GM12878 (cell line): ENCODE measurements at regions of chr15 and their contacts with region 1.

Region 1: DNA sequence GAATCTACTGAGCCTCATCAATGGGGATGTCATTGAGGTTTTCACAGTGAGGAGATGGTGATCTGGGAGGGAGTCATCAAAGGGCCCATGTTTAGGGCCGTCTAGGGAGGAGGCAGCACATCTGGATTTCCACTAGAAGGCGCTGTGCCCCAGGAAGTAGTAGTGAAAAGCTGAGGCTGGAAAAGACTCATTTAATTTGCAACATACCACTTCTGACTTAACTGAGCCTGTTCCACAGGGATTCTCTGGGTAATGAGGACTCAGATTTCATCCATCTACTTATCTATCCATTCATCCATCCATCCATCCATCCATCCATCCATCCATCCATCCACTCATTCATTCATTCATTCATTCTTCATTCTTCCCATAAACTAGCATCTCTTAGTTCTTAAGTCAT is 17.4 kb upstream of the SHF start:
- DNase-seq: peak; percentile 16
- ATAC-seq: peak; percentile 45
- H3K4me3 ChIP-seq: no peak overlapping the region
- H3K27ac ChIP-seq: no peak overlapping the region
- H3K4me1 ChIP-seq: no peaks in the 10 kb centered on the region; the same call in none of the 2 replicates
- H3K27me3 ChIP-seq: no peaks in the 10 kb centered on the region
- CTCF ChIP-seq: peak; percentile 90 to 94 (median 92)
- EP300 ChIP-seq: no peak
- POLR2A ChIP-seq: no peak
- RAD21 ChIP-seq: peak; percentile 87

Region 2: GRCh38 chr15:44918136-44918535 is 287.1 kb before region 1 on chr15:
- CTCF ChIA-PET with region 1: no interaction called
- POLR2A ChIA-PET with region 1: no interaction called
- RAD21 ChIA-PET with region 1: no interaction called
- SMC1A ChIA-PET with region 1: no interaction called
- in situ Hi-C with region 1: no loop called
- intact Hi-C with region 1: no loop called
- DNase-seq: no peak
- ATAC-seq: no peak
- H3K4me3 ChIP-seq: no peak overlapping the region
- H3K27ac ChIP-seq: no peak overlapping the region
- H3K4me1 ChIP-seq: no peaks in the 10 kb centered on the region
- H3K27me3 ChIP-seq: no peaks in the 10 kb centered on the region
- CTCF ChIP-seq: no peak
- EP300 ChIP-seq: no peak
- POLR2A ChIP-seq: no peak
- RAD21 ChIP-seq: no peak

Region 3: GRCh38 chr15:45126535-45127158 is 78.5 kb before region 1 on chr15:
- CTCF ChIA-PET with region 1: interaction called, 21 read pairs
- POLR2A ChIA-PET with region 1: no interaction called
- RAD21 ChIA-PET with region 1: interaction called, 4 read pairs
- SMC1A ChIA-PET with region 1: interaction called, 9 read pairs
- in situ Hi-C with region 1: no loop called
- intact Hi-C with region 1: no loop called
- DNase-seq: no peak
- ATAC-seq: peak; percentile 89
- H3K4me3 ChIP-seq: no peak overlapping the region
- H3K27ac ChIP-seq: no peak overlapping the region
- H3K4me1 ChIP-seq: no peaks in the 10 kb centered on the region
- H3K27me3 ChIP-seq: peaks cover 4 to 8% of the 10 kb centered on the region in 2 experiments
- CTCF ChIP-seq: peak; percentile 64 to 72 (median 67)
- EP300 ChIP-seq: no peak
- POLR2A ChIP-seq: no peak
- RAD21 ChIP-seq: peak; percentile 45

Region 4: DNA sequence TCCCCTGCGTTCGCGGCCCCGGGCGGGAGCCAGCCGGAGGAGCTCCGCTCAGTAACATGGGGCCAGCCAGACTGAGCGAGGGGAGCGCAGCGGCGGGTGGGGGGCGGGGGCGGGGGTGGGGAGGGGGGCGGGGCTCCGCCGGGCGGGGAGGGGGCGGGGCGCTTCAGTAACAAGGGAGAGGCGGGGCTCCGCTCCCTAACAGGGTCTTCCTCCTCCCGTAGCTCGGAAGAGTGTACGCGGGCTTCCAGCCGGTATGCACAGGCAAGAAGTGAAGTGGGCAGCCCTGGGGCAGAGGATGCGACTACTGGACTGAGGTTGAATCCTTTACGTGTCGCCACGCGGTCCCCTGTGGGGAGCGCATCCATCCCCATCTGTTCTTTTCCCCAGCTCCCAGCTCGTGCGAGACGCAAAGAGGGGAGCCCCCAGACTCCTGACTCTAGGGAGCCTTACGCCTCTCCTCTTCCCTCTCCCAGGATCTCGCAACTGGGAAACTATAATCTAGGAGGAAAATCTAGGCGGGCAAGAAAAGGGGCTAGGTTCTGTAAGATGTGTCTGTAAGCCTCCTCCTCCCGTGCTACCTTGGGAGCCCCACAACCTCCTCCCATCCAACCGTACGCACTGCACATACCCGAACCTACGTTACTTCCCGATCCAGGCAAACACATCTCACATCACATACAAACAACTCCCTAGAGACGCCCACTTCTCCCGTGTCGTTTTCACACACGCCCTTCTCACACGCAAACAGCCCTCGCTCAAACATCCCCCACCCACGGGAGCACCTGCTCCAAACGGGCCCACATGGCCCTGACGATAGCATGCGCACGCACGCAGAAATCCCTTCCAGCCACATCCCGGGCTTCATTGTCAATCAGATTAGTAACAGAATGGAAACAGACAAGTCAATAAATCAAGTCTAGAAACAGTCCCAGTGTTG is 17.0 kb before region 1 on chr15 and contains the start of gene SHF:
- CTCF ChIA-PET with region 1: interaction called, 12 read pairs
- POLR2A ChIA-PET with region 1: interaction called, 18 read pairs
- RAD21 ChIA-PET with region 1: interaction called, 7 read pairs
- SMC1A ChIA-PET with region 1: interaction called, 3 read pairs
- in situ Hi-C with region 1: no loop called
- intact Hi-C with region 1: no loop called
- DNase-seq: no peak
- ATAC-seq: peak; percentile 75
- H3K4me3 ChIP-seq: peak within 1 kb of the TSS; percentile 80
- H3K27ac ChIP-seq: no peak within 1 kb of the TSS
- H3K4me1 ChIP-seq: peaks cover 4% of the 10 kb centered on the region
- H3K27me3 ChIP-seq: peaks cover 0 to 2% of the 10 kb centered on the region in 2 experiments; a peak in 2 of 4 replicates
- CTCF ChIP-seq: no peak
- EP300 ChIP-seq: peak; percentile 94 to 95; a peak in 3 of 4 replicates
- POLR2A ChIP-seq: peak; percentile 82
- RAD21 ChIP-seq: no peak
- polyA plus RNA-seq, gene SHF: 0.04 TPM in 1 of 2 experiments, not detected in the other

Region 5: DNA sequence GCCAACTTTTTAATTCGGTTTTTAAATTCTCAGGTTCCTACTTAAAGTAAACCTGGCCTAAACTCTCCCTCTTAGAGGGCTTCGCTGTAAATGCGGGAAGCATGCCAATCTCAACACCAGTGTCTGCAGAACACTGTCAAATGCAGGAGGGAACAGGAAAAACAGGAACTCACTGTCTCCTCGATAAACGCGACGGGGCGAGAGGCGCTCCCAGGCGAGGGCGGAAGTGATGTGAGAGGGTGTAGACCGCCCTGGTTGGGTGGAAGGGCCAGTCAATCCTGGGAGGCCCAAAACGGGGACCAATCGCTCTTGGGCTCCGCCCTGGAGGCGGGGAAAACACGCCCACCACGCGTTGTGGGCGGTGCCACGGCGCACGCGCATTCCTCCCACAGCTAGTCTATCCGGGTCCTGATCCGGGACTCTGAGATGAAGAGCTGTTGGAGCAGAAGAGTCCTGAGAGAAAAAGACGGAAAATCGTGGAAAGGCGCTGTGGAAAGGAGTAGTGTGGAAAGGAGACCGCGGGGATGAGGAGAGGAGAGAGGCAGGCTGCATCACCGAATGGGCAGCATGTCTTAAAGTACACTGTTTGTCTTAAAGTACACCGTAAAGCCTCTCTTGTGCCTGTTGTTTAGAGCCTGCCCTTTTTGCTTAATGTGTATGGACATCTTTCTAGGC is 74.0 kb after region 1 on chr15:
- CTCF ChIA-PET with region 1: no interaction called
- POLR2A ChIA-PET with region 1: interaction called, 3 read pairs
- RAD21 ChIA-PET with region 1: interaction called, 11 read pairs
- SMC1A ChIA-PET with region 1: interaction called, 4 read pairs
- in situ Hi-C with region 1: loop called (anchors 5 kb)
- intact Hi-C with region 1: loop called (anchors 2 kb)
- DNase-seq: peak; percentile 95
- ATAC-seq: peak; percentile 100
- H3K4me3 ChIP-seq: peak overlapping the region; percentile 95
- H3K27ac ChIP-seq: peak overlapping the region; percentile 45
- H3K4me1 ChIP-seq: peaks cover 3% of the 10 kb centered on the region
- H3K27me3 ChIP-seq: no peaks in the 10 kb centered on the region
- CTCF ChIP-seq: no peak
- EP300 ChIP-seq: no peak
- POLR2A ChIP-seq: peak; percentile 91
- RAD21 ChIP-seq: no peak

Region 6: GRCh38 chr15:45351229-45351628 is 146.0 kb after region 1 on chr15:
- CTCF ChIA-PET with region 1: no interaction called
- POLR2A ChIA-PET with region 1: no interaction called
- RAD21 ChIA-PET with region 1: no interaction called
- SMC1A ChIA-PET with region 1: no interaction called
- in situ Hi-C with region 1: no loop called
- intact Hi-C with region 1: no loop called
- DNase-seq: no peak
- ATAC-seq: no peak
- H3K4me3 ChIP-seq: no peak overlapping the region
- H3K27ac ChIP-seq: no peak overlapping the region
- H3K4me1 ChIP-seq: no peaks in the 10 kb centered on the region
- H3K27me3 ChIP-seq: no peaks in the 10 kb centered on the region
- CTCF ChIP-seq: no peak
- EP300 ChIP-seq: no peak
- POLR2A ChIP-seq: no peak
- RAD21 ChIP-seq: no peak

Region 7: GRCh38 chr15:45391746-45392583 is 186.8 kb after region 1 on chr15:
- CTCF ChIA-PET with region 1: interaction called, 211 read pairs
- POLR2A ChIA-PET with region 1: interaction called, 6 read pairs
- RAD21 ChIA-PET with region 1: interaction called, 87 read pairs
- SMC1A ChIA-PET with region 1: interaction called, 111 read pairs
- in situ Hi-C with region 1: loop called (anchors 5 kb)
- intact Hi-C with region 1: no loop called
- DNase-seq: peak; percentile 90
- ATAC-seq: peak; percentile 96
- H3K4me3 ChIP-seq: 0 out of 2 replicates have a peak overlapping the region, but pooled peaks have one; percentile 11
- H3K27ac ChIP-seq: peak overlapping the region; percentile 72
- H3K4me1 ChIP-seq: peaks cover 21% of the 10 kb centered on the region
- H3K27me3 ChIP-seq: no peaks in the 10 kb centered on the region
- CTCF ChIP-seq: no peak
- EP300 ChIP-seq: peak; percentile 76 to 85
- POLR2A ChIP-seq: no peak
- RAD21 ChIP-seq: no peak

Region 8: DNA sequence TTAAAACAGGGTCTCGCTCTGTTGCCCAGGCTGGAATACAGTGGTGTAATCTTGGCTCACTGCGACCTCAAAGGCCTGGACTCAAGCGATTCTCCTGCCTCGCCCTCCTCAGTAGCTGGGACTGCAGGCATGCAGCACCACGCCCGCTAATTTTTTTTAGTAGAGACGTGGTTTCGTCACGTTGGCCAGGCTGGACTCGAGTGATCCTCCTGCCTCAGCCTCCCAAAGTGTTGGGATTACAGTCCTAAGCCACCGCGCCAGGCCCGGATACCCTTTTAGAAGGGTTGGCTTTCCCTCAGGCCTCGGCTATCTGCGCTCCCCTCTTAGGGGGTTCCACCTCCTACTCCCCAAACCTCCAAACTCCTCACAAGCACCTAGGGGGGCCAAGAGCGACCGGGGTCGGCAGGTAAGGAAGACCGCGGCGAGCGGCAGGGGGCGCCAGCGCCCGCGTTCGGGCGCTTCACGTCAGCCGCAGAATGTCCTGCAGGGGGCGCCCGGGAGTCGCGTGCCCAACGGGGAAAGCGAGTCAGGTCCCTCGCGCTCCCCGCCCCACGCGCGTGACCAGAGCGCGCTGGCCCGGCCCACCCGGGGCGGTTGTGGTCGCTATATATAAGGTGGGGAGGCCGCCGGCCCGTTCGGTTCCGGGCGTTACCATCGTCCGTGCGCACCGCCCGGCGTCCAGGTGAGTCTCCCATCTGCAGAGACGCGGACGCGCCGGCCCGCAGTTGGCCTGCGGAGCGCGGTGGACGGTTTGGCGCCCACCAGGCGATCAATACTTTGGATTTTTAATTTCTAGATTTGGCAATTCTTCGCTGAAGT is 225.0 kb after region 1 on chr15:
- CTCF ChIA-PET with region 1: interaction called, 26 read pairs
- POLR2A ChIA-PET with region 1: no interaction called
- RAD21 ChIA-PET with region 1: interaction called, 6 read pairs
- SMC1A ChIA-PET with region 1: no interaction called
- in situ Hi-C with region 1: no loop called
- intact Hi-C with region 1: no loop called
- DNase-seq: no peak
- ATAC-seq: peak; percentile 98
- H3K4me3 ChIP-seq: peak overlapping the region; percentile 61; the same call in 1 of the 2 replicates
- H3K27ac ChIP-seq: no peak overlapping the region
- H3K4me1 ChIP-seq: 0 out of 2 replicates have a peak, but pooled peaks cover 3% of the 10 kb centered on the region
- H3K27me3 ChIP-seq: no peaks in the 10 kb centered on the region
- CTCF ChIP-seq: peak; percentile 99 to 100 (median 99)
- EP300 ChIP-seq: no peak
- POLR2A ChIP-seq: no peak
- RAD21 ChIP-seq: peak; percentile 79

Region 9: GRCh38 chr15:45689616-45690015 is 484.4 kb after region 1 on chr15:
- CTCF ChIA-PET with region 1: no interaction called
- POLR2A ChIA-PET with region 1: no interaction called
- RAD21 ChIA-PET with region 1: no interaction called
- SMC1A ChIA-PET with region 1: no interaction called
- in situ Hi-C with region 1: no loop called
- intact Hi-C with region 1: no loop called
- DNase-seq: no peak
- ATAC-seq: no peak
- H3K4me3 ChIP-seq: no peak overlapping the region
- H3K27ac ChIP-seq: no peak overlapping the region
- H3K4me1 ChIP-seq: no peaks in the 10 kb centered on the region
- H3K27me3 ChIP-seq: no peaks in the 10 kb centered on the region
- CTCF ChIP-seq: no peak
- EP300 ChIP-seq: no peak
- POLR2A ChIP-seq: no peak
- RAD21 ChIP-seq: no peak